ENCODE measurements at regions of chr14 and their contacts with region 1.

Region 1: DNA sequence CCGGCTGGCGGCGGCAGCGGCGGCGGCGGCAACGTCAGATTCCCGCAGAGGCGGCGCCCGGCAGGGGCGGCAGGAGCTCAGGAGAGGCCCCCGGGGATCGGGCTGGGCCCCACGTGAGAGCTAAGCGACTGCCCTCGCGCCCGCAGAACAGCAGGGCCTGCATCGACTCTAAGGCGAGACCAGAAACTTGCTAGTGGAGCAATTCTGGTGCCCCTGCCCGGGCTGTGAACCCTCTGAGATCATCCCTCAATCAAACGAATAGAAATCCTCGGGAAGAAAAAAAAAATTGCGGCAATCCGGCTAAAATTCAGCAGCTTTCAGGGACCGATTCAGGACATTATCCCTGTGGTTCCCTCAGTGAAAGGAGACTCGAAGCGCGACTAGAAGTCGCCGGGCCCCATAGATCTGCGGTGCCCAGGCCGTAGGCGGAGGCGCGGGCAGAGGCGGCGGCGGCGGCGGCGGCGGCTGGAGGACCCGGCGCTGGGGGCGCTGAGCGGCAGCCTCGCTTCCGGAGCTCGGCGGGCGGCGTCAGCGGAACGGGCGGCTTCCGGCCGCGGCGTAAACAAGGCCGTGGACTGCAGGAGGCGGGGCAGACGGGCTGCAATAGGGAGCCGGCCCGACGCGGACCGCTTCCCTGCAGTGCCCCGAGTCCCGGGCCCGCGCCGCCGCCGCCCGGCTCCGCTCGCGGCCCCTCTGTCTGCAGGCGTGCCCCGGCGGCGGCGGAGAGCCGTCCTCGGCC is at the start of gene KLHDC2:
- DNase-seq: peak; percentile 39
- H3K4me3 ChIP-seq: peak within 1 kb of the TSS; percentile 80 to 99 (median 93)
- H3K27ac ChIP-seq: peak within 1 kb of the TSS; percentile 94 to 100 (median 97)
- H3K4me1 ChIP-seq: peaks cover 12 to 41% (median 19%) of the 10 kb centered on the region in 3 donors
- H3K27me3 ChIP-seq: no peaks in the 10 kb centered on the region
- CTCF ChIP-seq: peak in 4 of 6 experiments; percentile 7 to 35 (median 15)
- POLR2A ChIP-seq: peak in 3 of 4 donors; percentile 91 to 98 (median 98)
- total RNA-seq, gene KLHDC2: 21.1 to 56.1 (median 41.5) TPM

Region 2: DNA sequence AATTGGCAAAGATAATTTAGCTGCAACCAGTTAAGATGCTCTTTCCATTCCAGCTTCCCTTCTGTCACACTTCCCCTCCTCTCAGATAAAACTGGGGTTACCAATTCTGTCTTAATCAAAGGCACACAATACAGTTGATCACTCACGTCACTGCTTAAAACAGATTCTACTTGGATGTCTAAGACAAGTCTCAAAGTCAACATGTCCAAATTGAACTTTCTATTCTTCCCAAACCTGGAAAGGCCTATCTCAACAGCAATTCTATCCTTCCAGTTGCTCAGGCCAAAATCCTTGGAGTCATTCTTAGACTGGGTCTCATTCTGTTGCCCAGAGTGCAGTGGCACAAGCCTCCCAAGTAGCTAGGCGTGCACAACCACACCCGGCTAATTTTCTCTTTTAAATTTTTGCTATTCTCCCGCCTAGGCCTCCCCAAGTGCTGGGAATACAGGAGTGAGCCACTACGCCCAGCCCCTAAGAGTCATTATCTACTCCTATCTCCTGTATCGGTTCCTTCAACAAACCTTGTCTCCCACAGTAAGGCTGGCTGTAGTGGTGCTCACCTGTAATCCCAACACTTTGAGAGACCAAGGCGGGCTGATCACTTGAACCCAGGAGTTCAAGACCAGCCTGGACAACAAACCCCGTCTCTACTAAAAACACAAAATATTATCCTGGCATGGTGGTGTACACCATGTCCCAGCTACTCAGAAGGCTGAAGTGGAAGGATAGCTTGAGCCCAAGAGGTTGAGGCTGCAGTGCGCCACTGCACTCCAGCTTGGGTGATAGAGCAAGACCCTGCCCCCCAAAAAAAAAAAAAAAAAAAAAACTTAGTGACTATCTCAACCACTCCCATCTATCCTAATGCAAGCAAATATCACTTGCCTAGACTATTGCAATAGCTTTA is 186.3 kb before region 1 on chr14:
- intact Hi-C with region 1: no loop called
- DNase-seq: no peak
- H3K4me3 ChIP-seq: no peak overlapping the region
- H3K27ac ChIP-seq: peak overlapping the region in 3 of 4 donors; percentile 45 to 66 (median 53)
- H3K4me1 ChIP-seq: peaks cover 9 to 56% (median 19%) of the 10 kb centered on the region in 3 donors
- H3K27me3 ChIP-seq: no peaks in the 10 kb centered on the region
- CTCF ChIP-seq: no peak
- POLR2A ChIP-seq: no peak

Region 3: GRCh38 chr14:49633640-49634546 is 133.8 kb before region 1 on chr14:
- intact Hi-C with region 1: loop called (anchors 5 kb)
- DNase-seq: peak; percentile 71
- H3K4me3 ChIP-seq: peak overlapping the region; percentile 90 to 99 (median 94)
- H3K27ac ChIP-seq: peak overlapping the region; percentile 94 to 99 (median 98)
- H3K4me1 ChIP-seq: peaks cover 8 to 53% (median 32%) of the 10 kb centered on the region in 3 donors
- H3K27me3 ChIP-seq: no peaks in the 10 kb centered on the region
- CTCF ChIP-seq: peak; percentile 65 to 94 (median 81)
- POLR2A ChIP-seq: peak in 2 of 4 donors; percentile 81 to 87